ENCODE measurements at regions of chr12 and their contacts with region 1.

Region 1: GRCh38 chr12:82826505-82826904 is 139.8 kb downstream of the TMTC2 start:
- DNase-seq: no peak
- ATAC-seq: no peak
- H3K4me3 ChIP-seq: no peak overlapping the region
- H3K4me3 Mint-ChIP-seq: no peak overlapping the region
- H3K27ac ChIP-seq: no peak overlapping the region
- H3K27ac Mint-ChIP-seq: no peak overlapping the region
- H3K4me1 ChIP-seq: no peaks in the 10 kb centered on the region
- H3K4me1 Mint-ChIP-seq: peaks cover 0 to 3% (median 0%) of the 10 kb centered on the region in 7 donors
- H3K27me3 ChIP-seq: no peaks in the 10 kb centered on the region
- H3K27me3 Mint-ChIP-seq: no peaks in the 10 kb centered on the region

Region 2: GRCh38 chr12:83996671-83997070 is 1170.2 kb after region 1 on chr12:
- CTCF ChIA-PET with region 1: no interaction called
- POLR2A ChIA-PET with region 1: no interaction called
- intact Hi-C with region 1: loop called in 1 of 2 experiments (anchors 10 kb)
- DNase-seq: no peak
- ATAC-seq: no peak
- H3K4me3 ChIP-seq: no peak overlapping the region
- H3K4me3 Mint-ChIP-seq: no peak overlapping the region
- H3K27ac ChIP-seq: no peak overlapping the region
- H3K27ac Mint-ChIP-seq: no peak overlapping the region
- H3K4me1 ChIP-seq: no peaks in the 10 kb centered on the region
- H3K4me1 Mint-ChIP-seq: no peaks in the 10 kb centered on the region
- H3K27me3 ChIP-seq: no peaks in the 10 kb centered on the region
- H3K27me3 Mint-ChIP-seq: no peaks in the 10 kb centered on the region

Measured in naive thymus-derived CD4-positive, alpha-beta T cell (primary cell).